ENCODE measurements at regions of chr2 and their contacts with region 1.

Region 1: DNA sequence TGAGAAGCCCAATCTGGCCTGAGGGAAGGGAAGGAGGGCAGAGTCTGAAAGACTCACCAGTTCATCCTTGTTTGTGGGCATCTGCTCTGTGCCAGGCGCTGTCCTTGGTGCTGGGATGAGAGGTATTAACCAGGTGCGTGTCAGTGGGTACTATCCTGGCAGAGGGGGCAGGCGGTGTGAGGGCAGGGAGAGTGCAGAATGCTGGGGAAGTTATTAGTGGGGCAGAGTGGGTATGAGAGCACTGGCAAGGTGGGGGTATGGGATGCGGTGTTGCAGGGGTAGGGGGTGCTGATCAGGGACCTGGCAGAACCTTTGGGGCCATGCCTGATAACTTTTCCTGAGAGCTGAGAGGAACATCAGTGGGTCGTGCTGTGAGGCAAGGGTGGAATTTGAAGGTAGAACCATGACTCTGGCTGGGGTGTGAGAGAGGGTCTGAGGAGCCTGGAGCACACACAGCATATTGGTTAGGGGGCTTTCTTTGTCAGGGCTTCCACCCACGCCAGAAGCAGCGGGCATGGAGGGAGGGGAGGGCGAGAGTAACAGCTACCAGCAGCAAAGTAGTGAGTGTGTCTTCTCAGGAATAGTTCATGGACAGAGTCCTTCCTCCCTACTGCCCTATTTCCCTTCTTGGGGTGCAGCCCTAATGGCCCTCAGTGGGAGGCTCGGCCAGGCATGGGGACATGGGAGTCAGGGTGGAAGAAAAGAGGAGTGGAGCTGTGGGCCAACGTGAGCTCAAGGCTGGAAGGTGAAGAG is 290.7 kb downstream of the CYP26B1 start:
- DNase-seq: peak; percentile 29
- H3K4me3 ChIP-seq: no peak overlapping the region
- H3K27ac ChIP-seq: no peak overlapping the region
- H3K4me1 ChIP-seq: no peaks in the 10 kb centered on the region
- H3K27me3 ChIP-seq: no peaks in the 10 kb centered on the region
- CTCF ChIP-seq: no peak

Region 2: GRCh38 chr2:71491551-71492511 is 365.1 kb before region 1 on chr2:
- CTCF ChIA-PET with region 1: no interaction called
- POLR2A ChIA-PET with region 1: no interaction called
- intact Hi-C with region 1: no loop called
- DNase-seq: no peak
- H3K4me3 ChIP-seq: no peak overlapping the region
- H3K27ac ChIP-seq: no peak overlapping the region
- H3K4me1 ChIP-seq: no peaks in the 10 kb centered on the region
- H3K27me3 ChIP-seq: peaks cover 3% of the 10 kb centered on the region
- CTCF ChIP-seq: no peak

Region 3: DNA sequence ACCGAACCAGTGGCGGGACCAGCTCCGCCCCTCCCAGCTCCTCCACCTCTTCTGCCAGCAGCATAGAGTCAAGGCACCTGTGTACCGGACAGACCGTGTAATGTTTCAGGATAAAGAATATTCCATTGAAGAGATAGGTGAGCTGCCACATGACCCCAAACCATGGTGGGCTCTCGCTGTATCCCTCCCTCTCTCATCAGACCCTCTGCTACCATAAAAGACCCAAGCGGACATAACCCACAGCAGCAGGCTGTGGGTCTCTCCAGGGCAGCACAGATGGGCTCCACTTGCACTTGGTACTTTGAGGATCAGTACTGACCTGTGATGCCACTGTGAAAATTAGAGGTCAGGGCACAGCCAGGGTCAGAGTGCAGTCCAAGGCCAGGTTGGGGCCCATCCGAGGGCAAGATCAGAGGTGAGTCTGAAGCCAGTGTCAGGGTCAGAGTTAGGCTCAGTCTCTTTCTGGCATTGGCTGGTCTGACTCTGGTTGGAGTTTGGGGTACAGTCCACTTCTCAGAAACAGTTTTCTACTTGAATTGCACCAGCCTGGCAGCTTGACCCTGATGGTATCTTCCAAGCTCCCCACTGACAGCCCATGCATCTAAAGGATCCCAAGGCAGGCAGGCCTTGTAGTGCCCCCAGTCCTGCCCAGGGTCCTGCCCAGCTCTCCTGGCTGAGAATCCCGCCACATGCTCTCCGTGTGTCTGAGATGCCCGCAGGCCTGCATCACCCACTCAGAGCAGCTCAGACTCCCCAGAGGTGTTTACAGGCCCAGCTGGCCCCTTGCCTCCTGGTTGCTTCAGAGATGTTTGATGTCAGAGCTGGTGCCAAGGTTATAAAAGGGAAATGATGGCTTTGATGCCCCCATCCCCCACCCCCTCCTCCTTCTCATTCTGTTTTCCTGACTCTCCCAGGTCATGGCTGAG is 191.5 kb before region 1 on chr2:
- CTCF ChIA-PET with region 1: interaction called, 10 read pairs
- POLR2A ChIA-PET with region 1: no interaction called
- intact Hi-C with region 1: no loop called
- DNase-seq: no peak
- H3K4me3 ChIP-seq: no peak overlapping the region
- H3K27ac ChIP-seq: no peak overlapping the region
- H3K4me1 ChIP-seq: no peaks in the 10 kb centered on the region
- H3K27me3 ChIP-seq: no peaks in the 10 kb centered on the region
- CTCF ChIP-seq: no peak

Region 4: GRCh38 chr2:72220170-72220569 is 363.2 kb after region 1 on chr2:
- CTCF ChIA-PET with region 1: no interaction called
- POLR2A ChIA-PET with region 1: no interaction called
- intact Hi-C with region 1: no loop called
- DNase-seq: peak; percentile 66
- H3K4me3 ChIP-seq: no peak overlapping the region
- H3K27ac ChIP-seq: no peak overlapping the region
- H3K4me1 ChIP-seq: peaks cover 10% of the 10 kb centered on the region
- H3K27me3 ChIP-seq: no peaks in the 10 kb centered on the region
- CTCF ChIP-seq: peak; percentile 56

Measured in A673 (cell line).